Activated CD4-positive, alpha-beta T cell treated with anti-CD3 and anti-CD28 coated beads for 36 hours (primary cell): ENCODE measurements at regions of chr3 and their contacts with region 1.

Region 1: DNA sequence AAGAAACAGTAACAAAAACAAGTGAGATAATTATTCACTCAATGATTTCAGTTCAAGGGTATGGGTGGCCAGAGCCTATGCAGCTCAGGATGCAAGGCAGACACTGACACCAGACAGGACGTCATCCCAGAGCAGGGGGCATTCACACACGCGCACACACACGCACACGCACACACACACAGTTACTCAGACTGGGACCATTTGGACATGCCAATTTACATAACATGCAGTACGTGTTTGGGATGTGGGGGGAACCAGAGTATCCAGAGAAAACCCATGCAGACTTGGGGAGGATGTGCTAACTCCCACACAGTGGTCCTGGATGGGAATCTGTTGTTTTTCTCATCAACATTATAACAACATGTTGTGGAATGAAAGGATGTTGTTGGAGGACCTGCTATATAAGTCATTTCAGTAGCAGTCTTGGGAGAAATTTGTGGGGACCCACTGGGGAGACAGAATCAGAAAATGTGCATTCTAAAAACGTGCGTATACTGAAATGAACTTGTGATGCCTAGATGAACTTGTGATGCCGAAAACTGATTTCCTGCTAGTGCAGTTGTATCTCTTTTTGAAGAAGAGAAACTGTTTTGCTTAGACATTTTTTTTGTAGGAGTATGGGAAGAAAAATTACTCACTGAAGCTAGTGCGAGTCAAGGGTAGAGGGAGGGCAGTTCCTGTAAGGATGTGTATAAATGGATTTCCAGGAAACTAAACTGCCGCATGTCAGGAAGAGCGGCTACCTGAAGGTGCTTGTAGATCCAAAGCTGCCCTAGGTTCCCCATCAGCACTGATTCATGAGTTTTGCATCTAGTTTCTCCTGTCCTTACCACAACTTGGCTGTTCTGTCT is 25.2 kb downstream of the CD200 start:
- DNase-seq: peak; percentile 65
- ATAC-seq: peak; percentile 75
- H3K4me3 Mint-ChIP-seq: peak overlapping the region; percentile 54
- H3K27ac Mint-ChIP-seq: peak overlapping the region; percentile 68
- H3K4me1 Mint-ChIP-seq: peaks cover 30% of the 10 kb centered on the region
- H3K27me3 Mint-ChIP-seq: no peaks in the 10 kb centered on the region

Region 2: DNA sequence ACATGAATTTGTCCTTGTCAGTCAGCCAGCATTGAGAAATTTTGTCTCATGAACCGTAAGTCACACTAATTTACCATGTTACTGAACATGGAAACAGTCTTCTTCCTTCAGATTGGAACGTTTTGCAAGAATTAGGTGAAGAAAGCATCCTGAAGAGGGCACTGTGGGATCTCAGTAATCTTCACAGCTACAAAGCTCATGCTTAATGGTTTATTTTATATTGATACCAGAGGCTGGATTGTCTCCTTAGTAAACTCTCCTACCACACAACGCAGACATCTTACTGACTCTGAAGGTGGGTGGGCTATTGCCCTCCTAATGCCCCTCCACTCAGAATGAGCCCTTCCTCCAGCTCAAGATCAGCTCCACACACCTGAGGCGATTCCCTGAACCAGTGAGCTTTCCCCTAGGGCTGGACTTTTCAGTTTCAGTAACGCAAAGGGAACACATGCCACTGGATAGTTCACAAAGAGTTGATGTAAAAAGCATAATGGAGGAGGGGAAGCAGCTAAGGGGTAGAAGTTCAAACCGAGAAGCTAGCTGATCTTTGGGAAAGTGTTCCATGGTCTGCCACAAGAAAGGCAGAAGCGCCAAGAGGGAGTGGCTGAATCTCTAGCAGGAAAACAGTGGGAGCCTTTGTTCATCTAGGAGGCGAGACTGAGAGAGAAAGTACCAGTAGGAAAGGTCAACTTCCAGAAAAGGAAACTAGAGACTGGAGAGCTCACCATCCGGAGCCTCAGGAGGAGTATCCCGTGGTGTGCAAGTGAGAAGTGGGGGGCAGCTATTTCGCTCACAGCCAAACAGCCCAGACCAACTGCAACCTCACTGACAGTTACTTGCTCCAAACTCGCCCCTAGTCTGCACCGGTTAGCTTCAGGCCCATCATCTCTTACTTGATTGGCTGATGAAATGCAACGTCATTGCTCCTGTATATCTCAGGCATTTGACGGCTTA is 64.5 kb before region 1 on chr3 and contains the start of gene SLC9C1:
- CTCF ChIA-PET with region 1: no interaction called
- POLR2A ChIA-PET with region 1: no interaction called
- intact Hi-C with region 1: no loop called
- DNase-seq: peak; percentile 52
- ATAC-seq: peak; percentile 81
- H3K4me3 Mint-ChIP-seq: peak within 1 kb of the TSS; percentile 53
- H3K27ac Mint-ChIP-seq: peak within 1 kb of the TSS; percentile 38
- H3K4me1 Mint-ChIP-seq: peaks cover 21% of the 10 kb centered on the region
- H3K27me3 Mint-ChIP-seq: no peaks in the 10 kb centered on the region
- total RNA-seq, gene SLC9C1: not detected

Region 3: GRCh38 chr3:112338021-112338726 is 20.0 kb before region 1 on chr3:
- CTCF ChIA-PET with region 1: interaction called, 3 read pairs
- POLR2A ChIA-PET with region 1: no interaction called
- intact Hi-C with region 1: loop called in 1 of 2 experiments (anchors 1 kb)
- DNase-seq: no peak
- ATAC-seq: peak; percentile 80
- H3K4me3 Mint-ChIP-seq: peak overlapping the region; percentile 26
- H3K27ac Mint-ChIP-seq: peak overlapping the region; percentile 78
- H3K4me1 Mint-ChIP-seq: peaks cover 64% of the 10 kb centered on the region
- H3K27me3 Mint-ChIP-seq: no peaks in the 10 kb centered on the region

Region 4: DNA sequence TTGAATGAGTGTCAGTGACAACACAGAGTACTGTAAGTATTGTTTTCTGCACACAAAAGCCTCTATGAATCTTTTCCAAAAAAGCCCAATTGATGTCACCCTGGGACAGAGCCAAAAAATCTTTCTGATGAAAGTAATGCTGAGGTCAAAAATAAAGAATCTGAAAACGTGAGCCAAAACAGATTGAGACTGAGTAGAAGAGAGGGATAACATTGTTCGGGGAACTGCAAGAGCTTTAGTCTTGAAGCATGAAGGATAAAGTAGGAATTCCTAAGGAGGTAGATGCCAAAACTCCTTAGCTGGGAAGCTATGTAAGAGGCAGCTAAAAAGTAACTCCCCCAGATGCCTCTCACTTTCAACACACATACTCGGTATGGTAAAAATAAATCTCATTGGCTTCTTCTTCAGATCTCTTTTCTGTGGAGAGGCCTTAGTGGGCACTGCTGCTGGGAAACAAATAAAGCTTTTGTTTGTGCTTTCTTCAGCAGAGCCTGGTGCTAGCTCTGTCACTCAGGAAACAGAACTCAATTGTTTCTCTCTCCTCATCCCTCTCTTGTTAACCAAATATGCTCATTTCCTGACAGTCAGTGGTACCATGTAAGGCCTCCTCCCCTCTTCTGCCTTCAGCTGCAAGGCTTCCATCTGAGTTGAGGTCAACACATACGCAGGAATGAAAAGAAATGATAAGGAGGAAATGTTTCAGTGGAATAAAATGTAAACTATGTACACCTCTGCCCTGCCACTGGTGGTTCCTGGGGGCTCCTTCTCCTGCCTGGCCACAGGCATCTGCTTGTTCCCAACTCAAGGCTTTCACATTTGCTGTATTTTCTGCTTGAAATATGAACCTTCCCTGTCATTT is 32.9 kb after region 1 on chr3:
- CTCF ChIA-PET with region 1: no interaction called
- POLR2A ChIA-PET with region 1: no interaction called
- intact Hi-C with region 1: loop called in 1 of 2 experiments (anchors 5 kb)
- DNase-seq: no peak
- ATAC-seq: peak; percentile 73
- H3K4me3 Mint-ChIP-seq: no peak overlapping the region
- H3K27ac Mint-ChIP-seq: peak overlapping the region; percentile 70
- H3K4me1 Mint-ChIP-seq: peaks cover 53% of the 10 kb centered on the region
- H3K27me3 Mint-ChIP-seq: no peaks in the 10 kb centered on the region

Region 5: GRCh38 chr3:112405845-112406244 is 47.7 kb after region 1 on chr3:
- CTCF ChIA-PET with region 1: interaction called, 4 read pairs
- POLR2A ChIA-PET with region 1: interaction called, 10 read pairs
- intact Hi-C with region 1: no loop called
- DNase-seq: peak; percentile 72
- ATAC-seq: peak; percentile 90
- H3K4me3 Mint-ChIP-seq: no peak overlapping the region
- H3K27ac Mint-ChIP-seq: no peak overlapping the region
- H3K4me1 Mint-ChIP-seq: peaks cover 28% of the 10 kb centered on the region
- H3K27me3 Mint-ChIP-seq: no peaks in the 10 kb centered on the region